ENCODE measurements at regions of chr6 and their contacts with region 1.

Region 1: DNA sequence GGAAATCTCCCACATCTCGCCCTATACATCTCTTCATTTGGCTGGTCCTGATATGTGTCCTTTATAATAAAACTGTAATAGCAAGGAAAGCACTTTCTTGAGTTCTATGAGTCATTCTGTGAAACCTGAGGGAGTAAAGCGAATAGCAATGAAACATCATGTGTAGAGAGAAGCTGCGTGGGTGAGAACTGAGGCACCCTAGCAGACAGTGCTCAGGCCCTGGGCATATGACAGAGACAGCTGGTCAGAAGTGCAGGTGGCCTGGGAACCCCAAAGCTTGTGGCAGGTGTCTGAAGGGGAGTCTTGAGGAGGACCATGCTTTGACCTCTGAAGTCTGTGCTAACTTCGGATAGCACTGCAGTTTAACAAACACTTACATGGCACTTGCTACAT is 1.3 kb upstream of the BLOC1S5 start:
- DNase-seq: no peak
- H3K4me3 ChIP-seq: no peak overlapping the region
- CTCF ChIP-seq: no peak

Region 2: DNA sequence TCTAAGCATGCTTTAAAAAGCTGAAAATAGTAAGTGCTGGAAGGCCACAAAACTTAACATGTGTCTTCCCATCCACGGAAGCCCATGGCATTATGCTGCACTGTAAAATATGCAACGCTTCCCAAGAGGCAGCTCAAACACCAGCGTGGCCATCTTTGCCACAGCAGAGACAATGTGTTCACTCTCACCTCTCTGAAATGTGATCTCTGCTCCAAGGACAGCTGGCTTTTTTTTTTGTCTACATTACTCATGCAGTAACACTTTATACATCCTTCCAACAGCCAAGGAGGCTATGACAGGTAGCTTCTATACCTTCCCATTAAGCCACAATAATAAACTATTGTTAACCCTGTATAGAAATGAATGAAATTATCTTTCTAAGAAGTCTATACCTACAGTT is 50.6 kb before region 1 on chr6:
- in situ Hi-C with region 1: loop called (anchors 5 kb)
- DNase-seq: no peak
- H3K4me3 ChIP-seq: no peak overlapping the region
- CTCF ChIP-seq: no peak

Region 3: GRCh38 chr6:8029243-8029870 is 36.2 kb before region 1 on chr6:
- in situ Hi-C with region 1: no loop called
- DNase-seq: no peak
- H3K4me3 ChIP-seq: no peak overlapping the region
- CTCF ChIP-seq: no peak

Region 4: DNA sequence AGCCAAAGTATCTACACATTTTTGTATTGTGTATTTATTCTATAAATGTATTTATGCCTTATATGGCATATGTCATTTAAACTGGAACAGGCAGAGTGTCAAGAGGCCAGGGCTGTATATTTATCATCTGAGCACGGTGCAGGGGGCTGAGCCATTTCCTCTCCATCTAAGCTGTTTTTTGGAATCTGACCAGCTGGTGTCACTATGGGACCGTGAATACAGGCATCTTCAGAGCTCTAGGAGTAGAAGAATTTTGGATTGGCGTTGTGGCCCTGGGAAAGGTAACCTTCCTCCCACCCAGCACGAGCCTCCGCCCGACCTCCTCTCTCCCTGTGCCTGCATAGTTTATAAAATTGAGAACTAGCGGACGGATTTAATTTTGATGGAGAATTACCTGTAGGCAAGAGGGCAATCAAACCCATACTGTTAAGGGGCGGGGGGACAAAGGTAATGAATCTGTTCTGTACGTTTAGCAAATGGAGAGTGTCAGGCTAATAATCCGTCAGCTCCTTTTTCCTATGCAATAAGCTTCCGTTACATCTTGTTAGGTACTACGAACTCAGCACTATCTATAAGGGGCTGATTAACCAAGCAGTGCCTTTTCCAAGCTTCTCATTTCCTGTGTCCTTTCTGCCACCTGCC is 65.9 kb after region 1 on chr6:
- in situ Hi-C with region 1: no loop called
- DNase-seq: peak; percentile 55
- H3K4me3 ChIP-seq: no peak overlapping the region
- CTCF ChIP-seq: peak; percentile 69

Region 5: DNA sequence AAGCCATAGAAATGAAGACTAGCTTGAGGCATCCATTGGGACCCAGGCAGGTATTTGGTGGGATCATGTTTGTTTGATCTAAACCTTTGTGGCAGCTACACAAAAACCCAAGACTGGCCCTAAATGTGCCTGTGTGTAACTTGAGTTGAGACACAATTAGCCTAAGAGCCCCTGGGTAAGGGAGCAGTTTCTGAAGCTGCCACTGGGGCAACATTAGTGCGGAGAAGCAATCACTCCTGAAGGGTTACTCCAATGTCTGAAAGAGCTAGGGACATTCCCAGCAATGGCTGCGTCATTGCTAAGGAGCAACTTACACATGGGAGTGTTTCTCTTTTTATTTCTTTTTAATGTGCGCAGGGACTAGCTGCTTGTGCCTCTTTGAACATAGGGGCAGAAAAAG is 104.7 kb after region 1 on chr6:
- in situ Hi-C with region 1: loop called (anchors 5 kb)
- DNase-seq: no peak
- H3K4me3 ChIP-seq: no peak overlapping the region
- CTCF ChIP-seq: no peak

Region 6: GRCh38 chr6:8277769-8278168 is 212.3 kb after region 1 on chr6:
- in situ Hi-C with region 1: no loop called
- DNase-seq: no peak
- H3K4me3 ChIP-seq: no peak overlapping the region
- CTCF ChIP-seq: no peak

Measured in astrocyte of the cerebellum (primary cell).